ENCODE measurements at regions of chr22 and their contacts with region 1.

Region 1: GRCh38 chr22:37498289-37498909 is 12.2 kb upstream of the MFNG start:
- DNase-seq: peak; percentile 61 to 86 (median 72)
- ATAC-seq: peak; percentile 99
- H3K4me3 Mint-ChIP-seq: no peak overlapping the region
- H3K27ac Mint-ChIP-seq: peak overlapping the region in 1 of 10 donors; percentile 8
- H3K4me1 Mint-ChIP-seq: peaks cover 24 to 36% (median 32%) of the 10 kb centered on the region in 4 donors
- H3K27me3 Mint-ChIP-seq: no peaks in the 10 kb centered on the region

Region 2: GRCh38 chr22:37462983-37463382 is 35.4 kb before region 1 on chr22:
- POLR2A ChIA-PET with region 1: interaction called, 10 read pairs
- DNase-seq: no peak
- ATAC-seq: no peak
- H3K4me3 Mint-ChIP-seq: no peak overlapping the region
- H3K27ac Mint-ChIP-seq: peak overlapping the region in 2 of 10 donors; percentile 18 to 54
- H3K4me1 Mint-ChIP-seq: peaks cover under 1 to 32% (median 11%) of the 10 kb centered on the region in 4 donors
- H3K27me3 Mint-ChIP-seq: no peaks in the 10 kb centered on the region

Region 3: GRCh38 chr22:37472418-37473006 is 25.9 kb before region 1 on chr22:
- POLR2A ChIA-PET with region 1: interaction called, 13 read pairs
- DNase-seq: peak in 8 of 10 donors; percentile 28 to 75 (median 46)
- ATAC-seq: peak; percentile 42 to 58
- H3K4me3 Mint-ChIP-seq: no peak overlapping the region
- H3K27ac Mint-ChIP-seq: peak overlapping the region in 8 of 10 donors; percentile 26 to 89 (median 56)
- H3K4me1 Mint-ChIP-seq: peaks cover 7 to 33% (median 18%) of the 10 kb centered on the region in 4 donors
- H3K27me3 Mint-ChIP-seq: no peaks in the 10 kb centered on the region